ENCODE measurements at regions of chr15 and their contacts with region 1.

Region 1: DNA sequence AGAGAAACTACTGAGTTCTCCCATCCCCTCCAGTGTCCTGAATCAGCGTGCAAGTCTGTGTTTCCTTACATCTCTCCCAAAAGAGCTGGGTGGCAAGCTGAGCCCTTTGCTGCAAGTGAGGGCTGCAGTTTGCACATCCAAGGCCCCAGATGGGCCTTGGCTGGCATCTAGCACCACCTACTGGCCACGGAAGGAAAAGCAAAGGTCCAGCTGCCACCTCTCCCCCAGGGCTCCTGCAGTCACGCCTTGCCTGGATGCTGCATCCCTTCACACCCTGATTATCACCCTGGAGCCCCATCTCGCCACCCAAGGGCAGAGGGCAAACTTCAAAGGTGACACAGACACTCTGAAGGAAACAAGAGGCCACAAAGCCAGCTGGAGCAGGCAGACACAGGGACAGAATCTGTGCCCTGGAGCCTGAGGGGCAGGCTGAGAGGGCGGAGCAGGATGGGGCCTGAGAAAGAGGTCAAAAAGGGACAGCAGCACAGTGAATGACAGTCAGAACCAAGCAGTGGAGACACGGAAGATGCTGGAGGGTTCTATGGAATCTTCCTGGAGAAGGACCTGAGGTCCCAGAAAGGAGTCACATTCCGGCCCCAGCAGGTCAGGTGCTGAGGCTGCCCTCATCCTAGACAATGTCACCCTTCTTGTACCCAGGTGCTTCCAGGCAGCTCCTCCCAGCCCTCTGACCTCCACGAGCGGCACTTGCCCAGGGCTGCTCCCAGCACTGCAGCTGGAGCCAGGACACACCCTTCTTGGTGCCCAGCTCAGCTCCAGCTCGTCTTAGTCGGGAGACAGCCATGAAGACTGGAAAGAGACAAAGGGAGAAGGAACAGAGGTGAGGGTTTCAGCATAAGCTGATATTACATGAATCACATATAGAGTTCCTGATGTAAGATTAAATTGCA is 18.3 kb upstream of the NTRK3 start:
- DNase-seq: peak; percentile 80
- CTCF ChIP-seq: peak; percentile 83

Region 2: DNA sequence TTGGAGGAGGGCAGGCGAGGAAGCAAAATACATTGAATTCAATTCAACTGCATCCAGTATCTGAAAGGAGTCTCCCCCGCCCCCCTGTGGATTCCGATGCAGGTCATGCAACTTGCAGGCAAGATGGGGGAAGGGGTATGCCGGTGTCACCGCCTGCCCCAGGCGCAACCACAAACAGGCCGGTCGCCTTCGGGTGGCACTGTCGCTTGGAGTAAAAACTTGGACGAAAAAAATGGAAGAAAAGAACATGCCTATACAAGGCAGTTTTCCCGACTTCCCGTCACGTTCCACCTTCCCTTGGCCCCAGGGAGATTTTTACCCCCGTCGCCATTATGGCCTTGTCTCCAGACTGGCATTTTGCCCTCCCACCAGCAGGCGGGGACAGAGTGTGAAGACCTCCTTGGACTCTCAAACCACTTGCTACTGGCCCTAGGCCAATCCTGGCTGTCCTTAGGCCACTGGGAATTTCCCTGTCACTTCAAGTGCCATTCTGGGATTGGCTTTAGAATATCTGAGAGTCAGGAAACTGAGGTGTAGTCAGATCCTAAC is 16.6 kb before region 1 on chr15:
- CTCF ChIA-PET with region 1: interaction called, 21 read pairs
- POLR2A ChIA-PET with region 1: no interaction called
- DNase-seq: no peak
- CTCF ChIP-seq: peak; percentile 6

Region 3: GRCh38 chr15:88299497-88299896 is 24.7 kb after region 1 on chr15:
- CTCF ChIA-PET with region 1: interaction called, 15 read pairs
- POLR2A ChIA-PET with region 1: no interaction called
- DNase-seq: no peak
- CTCF ChIP-seq: no peak

Measured in GM10248 (cell line).